IMR-90 (cell line): ENCODE measurements at regions of chr11 and their contacts with region 1.

Region 1: DNA sequence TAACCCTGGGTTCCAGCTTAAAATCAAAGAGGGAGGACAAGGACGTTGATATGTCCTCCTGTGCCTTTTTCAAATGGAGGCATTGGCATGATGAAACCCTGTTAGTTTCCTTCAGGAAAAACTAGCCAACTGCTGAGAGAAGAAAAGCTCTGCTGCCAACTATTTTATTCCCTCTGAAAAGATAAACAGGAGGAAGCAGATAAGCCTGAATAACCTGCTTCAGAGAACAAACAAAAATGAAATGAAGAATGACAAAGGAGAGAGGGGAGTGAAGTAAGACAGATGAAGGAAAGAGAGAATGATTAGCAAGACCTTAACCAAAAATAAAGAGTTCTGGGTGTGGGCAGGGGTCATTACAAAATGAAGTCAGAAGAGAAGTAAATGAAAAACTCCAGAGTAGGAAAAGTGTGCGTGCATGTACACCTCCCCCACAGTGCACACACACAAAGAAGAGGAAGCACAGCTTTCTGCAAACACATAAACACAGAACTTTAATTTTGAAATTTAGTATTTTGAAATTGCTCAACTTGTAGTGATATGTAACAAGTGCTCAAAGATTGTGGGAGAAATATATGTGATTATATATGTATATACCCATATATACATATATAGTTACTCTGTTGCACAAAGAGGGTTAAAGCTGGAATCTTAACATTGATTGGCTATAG is 332.2 kb downstream of the LUZP2 start:
- DNase-seq: no peak
- ATAC-seq: no peak
- H3K4me3 ChIP-seq: no peak overlapping the region
- H3K27ac ChIP-seq: no peak overlapping the region
- H3K4me1 ChIP-seq: no peaks in the 10 kb centered on the region
- H3K27me3 ChIP-seq: no peaks in the 10 kb centered on the region
- CTCF ChIP-seq: no peak
- POLR2A ChIP-seq: no peak
- RAD21 ChIP-seq: no peak

Region 2: GRCh38 chr11:24723231-24723630 is 105.8 kb before region 1 on chr11:
- CTCF ChIA-PET with region 1: no interaction called
- POLR2A ChIA-PET with region 1: no interaction called
- dilution Hi-C with region 1: no loop called
- in situ Hi-C with region 1: no loop called
- intact Hi-C with region 1: loop called (anchors 5 kb)
- DNase-seq: no peak
- ATAC-seq: no peak
- H3K4me3 ChIP-seq: no peak overlapping the region
- H3K27ac ChIP-seq: no peak overlapping the region
- H3K4me1 ChIP-seq: no peaks in the 10 kb centered on the region
- H3K27me3 ChIP-seq: no peaks in the 10 kb centered on the region
- CTCF ChIP-seq: no peak
- POLR2A ChIP-seq: no peak
- RAD21 ChIP-seq: no peak